Breast epithelium (tissue), 4 donors: ENCODE measurements at regions of chr12 and their contacts with region 1.

Region 1: DNA sequence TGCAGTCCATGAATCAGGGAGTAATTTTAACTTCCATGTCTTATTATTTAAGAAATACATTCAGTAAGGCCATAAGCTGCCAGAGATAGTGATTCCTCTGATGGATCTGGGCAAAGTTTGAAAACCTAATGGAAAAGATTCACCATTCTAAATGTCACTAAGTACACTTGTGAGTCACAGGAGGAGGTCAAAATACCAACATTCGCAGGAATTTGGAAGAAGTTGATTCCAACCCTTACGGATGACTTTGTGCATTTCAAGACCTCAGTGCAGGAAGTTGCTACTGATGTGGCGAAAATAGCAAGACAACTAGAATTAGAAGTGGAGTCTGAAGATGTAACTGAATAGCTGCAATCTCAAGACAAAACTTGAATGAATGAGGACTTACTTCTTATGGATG is 69.8 kb downstream of the OSBPL8 start:
- DNase-seq: no peak
- H3K4me3 ChIP-seq: no peak overlapping the region
- H3K27ac ChIP-seq: no peak overlapping the region
- H3K4me1 ChIP-seq: no peaks in the 10 kb centered on the region
- H3K27me3 ChIP-seq: no peaks in the 10 kb centered on the region
- CTCF ChIP-seq: no peak
- POLR2A ChIP-seq: no peak

Region 2: DNA sequence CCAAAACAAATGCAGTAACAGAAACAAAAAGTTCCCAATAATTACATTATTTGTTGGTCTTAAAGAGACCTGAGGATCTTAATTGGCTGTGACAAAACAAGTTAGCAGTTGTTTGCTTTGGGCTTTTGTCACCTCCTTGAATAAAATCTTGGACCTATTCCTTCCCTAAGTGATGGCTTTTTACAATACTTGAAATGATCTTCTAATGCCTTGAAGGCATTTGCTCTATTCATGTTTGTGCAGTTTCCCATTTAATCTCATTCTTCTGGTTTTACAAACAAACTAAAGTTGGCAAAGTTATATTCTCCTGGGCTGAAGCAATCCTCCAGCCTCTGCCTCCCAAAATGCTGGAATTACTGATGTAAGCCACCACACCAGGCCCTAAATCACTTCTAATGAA is 28.9 kb before region 1 on chr12:
- intact Hi-C with region 1: loop called (anchors 2 kb)
- DNase-seq: no peak
- H3K4me3 ChIP-seq: no peak overlapping the region
- H3K27ac ChIP-seq: no peak overlapping the region
- H3K4me1 ChIP-seq: peaks cover 0 to 7% of the 10 kb centered on the region in 2 donors
- H3K27me3 ChIP-seq: no peaks in the 10 kb centered on the region
- CTCF ChIP-seq: no peak
- POLR2A ChIP-seq: no peak

Region 3: DNA sequence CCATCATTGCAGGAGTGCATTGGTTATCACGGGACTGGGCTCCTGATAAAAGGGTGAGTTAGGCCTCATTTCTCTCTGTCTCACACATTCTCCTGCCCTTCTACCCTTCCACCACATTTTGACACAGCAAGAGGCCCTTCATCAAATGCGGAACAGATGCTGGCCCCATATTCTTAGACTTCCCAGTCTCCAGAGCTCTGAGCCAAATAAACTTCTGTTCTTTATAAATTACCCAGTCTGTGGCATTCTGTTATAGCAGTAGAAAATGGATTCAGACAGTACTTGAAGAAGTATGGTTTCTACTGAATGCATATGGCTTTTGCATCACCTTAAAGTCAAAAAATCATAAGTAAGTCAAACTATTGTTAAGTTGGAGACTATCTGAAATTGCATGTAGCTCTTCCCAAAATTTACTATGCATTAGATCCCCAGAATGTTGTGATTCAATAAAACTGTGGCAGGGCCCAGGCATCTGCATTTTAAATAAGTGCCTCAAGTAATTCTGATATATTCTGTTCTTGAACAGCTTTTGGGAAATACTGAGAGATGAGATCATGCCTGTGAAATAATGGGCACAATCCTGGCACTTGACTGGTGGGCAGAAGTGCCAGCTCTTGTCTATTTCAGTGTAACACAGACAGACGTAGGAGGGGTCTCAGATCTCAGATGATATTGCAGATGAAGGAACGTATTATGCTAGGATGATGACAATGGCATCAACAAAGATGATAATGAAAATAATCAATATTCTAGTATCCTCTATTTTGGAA is 507.5 kb after region 1 on chr12:
- intact Hi-C with region 1: loop called (anchors 5 kb)
- DNase-seq: no peak
- H3K4me3 ChIP-seq: no peak overlapping the region
- H3K27ac ChIP-seq: no peak overlapping the region
- H3K4me1 ChIP-seq: no peaks in the 10 kb centered on the region
- H3K27me3 ChIP-seq: no peaks in the 10 kb centered on the region
- CTCF ChIP-seq: no peak
- POLR2A ChIP-seq: no peak